Right cardiac atrium (tissue), 5 donors: ENCODE measurements at regions of chr3 and their contacts with region 1.

Region 1: GRCh38 chr3:46488735-46489361 is 8.9 kb upstream of the RTP3 start:
- DNase-seq: peak; percentile 91 to 96 (median 94)
- ATAC-seq: peak; percentile 92 to 93
- H3K4me3 ChIP-seq: no peak overlapping the region
- H3K27ac ChIP-seq: no peak overlapping the region
- H3K4me1 ChIP-seq: no peaks in the 10 kb centered on the region
- H3K27me3 ChIP-seq: no peaks in the 10 kb centered on the region

Region 2: GRCh38 chr3:46558184-46559043 is 69.6 kb after region 1 on chr3:
- intact Hi-C with region 1: loop called in 1 of 4 experiments (anchors 5 kb)
- DNase-seq: peak; percentile 89 to 92 (median 90)
- ATAC-seq: peak; percentile 91 to 97
- H3K4me3 ChIP-seq: peak overlapping the region; percentile 28
- H3K27ac ChIP-seq: peak overlapping the region; percentile 49
- H3K4me1 ChIP-seq: no peaks in the 10 kb centered on the region
- H3K27me3 ChIP-seq: no peaks in the 10 kb centered on the region

Region 3: GRCh38 chr3:46629551-46630517 is 141.0 kb after region 1 on chr3:
- intact Hi-C with region 1: loop called (anchors 5 kb)
- DNase-seq: peak; percentile 86 to 94 (median 93)
- ATAC-seq: peak; percentile 94 to 95
- H3K4me3 ChIP-seq: peak overlapping the region; percentile 41
- H3K27ac ChIP-seq: peak overlapping the region; percentile 9
- H3K4me1 ChIP-seq: peaks cover 3% of the 10 kb centered on the region
- H3K27me3 ChIP-seq: no peaks in the 10 kb centered on the region

Region 4: DNA sequence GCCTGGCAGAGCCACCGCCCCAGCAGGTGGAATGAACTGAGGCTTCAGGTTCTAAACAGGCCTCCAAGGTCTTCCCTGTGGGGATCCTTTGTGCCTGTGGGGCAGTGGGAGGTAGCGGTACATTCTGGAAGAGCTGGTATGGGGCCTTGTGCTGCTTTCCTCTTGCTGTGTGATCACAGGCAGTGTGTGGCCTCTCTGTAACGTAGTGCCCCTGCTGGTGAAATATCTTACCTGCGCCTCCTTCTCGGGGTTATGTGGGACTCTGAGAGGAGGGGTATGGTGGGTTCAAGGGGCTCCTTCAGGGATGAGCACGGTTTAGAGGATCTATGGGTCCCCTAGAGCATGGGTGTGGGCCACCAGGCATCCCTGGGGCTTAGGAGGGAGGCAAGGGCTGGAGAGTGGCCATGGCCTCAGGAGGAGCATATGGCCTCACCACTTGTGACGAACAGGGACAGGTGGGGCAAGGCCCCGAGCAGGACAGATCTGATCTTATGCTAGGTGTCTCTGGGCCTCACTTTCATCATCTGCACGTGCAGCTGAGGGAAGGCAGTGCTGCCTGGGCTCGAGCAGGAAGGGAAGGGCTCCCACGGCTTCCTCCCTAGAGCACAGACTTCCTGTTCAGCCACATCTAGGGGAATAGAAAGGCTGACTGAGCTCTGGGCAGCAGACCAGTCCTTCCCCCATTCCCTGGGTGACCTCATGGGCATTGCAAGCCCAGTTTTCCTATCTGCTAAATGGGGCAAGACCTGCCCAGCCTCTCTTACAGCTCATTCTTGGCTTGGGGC is 206.5 kb after region 1 on chr3:
- intact Hi-C with region 1: no loop called
- DNase-seq: peak; percentile 73 to 88 (median 86)
- ATAC-seq: peak; percentile 44 to 73
- H3K4me3 ChIP-seq: no peak overlapping the region
- H3K27ac ChIP-seq: peak overlapping the region; percentile 82
- H3K4me1 ChIP-seq: peaks cover 31% of the 10 kb centered on the region
- H3K27me3 ChIP-seq: no peaks in the 10 kb centered on the region